HCT116 (cell line): ENCODE measurements at regions of chr19 and their contacts with region 1.

Region 1: GRCh38 chr19:58558623-58559274 is 338 bp upstream of the UBE2M start:
- DNase-seq: peak; percentile 98
- ATAC-seq: peak; percentile 68
- H3K4me3 ChIP-seq: peak overlapping the region; percentile 74 to 99
- H3K27ac ChIP-seq: peak overlapping the region; percentile 98
- H3K4me1 ChIP-seq: peaks cover 22 to 49% of the 10 kb centered on the region in 2 experiments
- H3K27me3 ChIP-seq: no peaks in the 10 kb centered on the region
- CTCF ChIP-seq: no peak
- POLR2A ChIP-seq: no peak
- RAD21 ChIP-seq: no peak

Region 2: DNA sequence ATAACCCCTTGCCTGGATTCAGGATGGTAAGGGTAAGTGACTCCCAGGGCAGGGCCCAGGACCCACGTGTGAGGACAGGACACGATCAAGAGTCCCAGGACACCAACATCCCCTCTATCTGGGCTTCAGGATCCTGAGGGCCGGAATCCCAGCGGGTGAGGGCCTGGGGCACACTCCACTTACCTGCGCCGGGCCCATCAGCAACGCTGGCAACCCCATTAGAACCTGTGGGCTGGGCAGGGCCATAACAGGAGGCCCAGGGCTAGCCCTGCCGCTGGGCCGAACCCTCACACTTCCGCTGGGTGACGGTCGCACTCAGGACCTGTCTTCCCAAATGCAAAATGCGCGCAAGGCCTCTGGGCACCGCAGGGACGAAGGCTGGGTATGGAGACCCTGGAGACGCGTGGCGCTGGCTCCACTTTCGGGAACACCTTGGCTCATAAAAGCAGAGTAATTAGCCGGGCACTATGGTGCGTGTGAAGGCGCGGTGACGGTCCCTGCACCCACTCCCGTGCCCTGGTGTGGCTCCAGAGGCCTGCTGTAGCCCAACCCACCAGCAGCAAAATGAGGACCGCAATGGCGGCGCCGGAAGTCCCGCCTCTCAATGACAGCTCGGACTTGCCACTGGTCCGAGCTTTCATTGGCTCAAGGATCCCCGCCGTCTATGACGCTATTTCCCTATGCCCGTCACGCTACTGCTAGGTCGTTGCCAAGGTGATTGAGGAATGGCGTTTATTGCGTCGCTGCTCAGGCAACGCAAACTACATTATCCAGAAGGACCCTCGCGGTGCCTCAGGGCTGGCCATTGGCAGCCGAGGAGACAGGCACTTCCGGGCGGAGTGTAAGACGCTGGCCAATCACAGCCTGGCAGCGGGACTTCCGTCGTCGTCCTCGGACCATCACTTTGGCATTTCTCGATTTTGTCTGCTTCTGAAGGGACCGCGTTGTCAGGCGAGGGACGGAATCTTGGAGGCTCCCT is 118.9 kb before region 1 on chr19 and contains the start of gene ZNF132:
- CTCF ChIA-PET with region 1: no interaction called
- POLR2A ChIA-PET with region 1: no interaction called
- RAD21 ChIA-PET with region 1: no interaction called
- intact Hi-C with region 1: no loop called
- DNase-seq: no peak
- ATAC-seq: no peak
- H3K4me3 ChIP-seq: no peak within 1 kb of the TSS
- H3K27ac ChIP-seq: no peak within 1 kb of the TSS
- H3K4me1 ChIP-seq: no peaks in the 10 kb centered on the region
- H3K27me3 ChIP-seq: no peaks in the 10 kb centered on the region
- CTCF ChIP-seq: no peak
- POLR2A ChIP-seq: no peak
- RAD21 ChIP-seq: no peak
- total RNA-seq, gene ZNF132: not detected

Region 3: GRCh38 chr19:58450836-58451357 is 107.9 kb before region 1 on chr19:
- CTCF ChIA-PET with region 1: no interaction called
- POLR2A ChIA-PET with region 1: no interaction called
- RAD21 ChIA-PET with region 1: no interaction called
- intact Hi-C with region 1: no loop called
- DNase-seq: no peak
- ATAC-seq: peak; percentile 51
- H3K4me3 ChIP-seq: peak overlapping the region; percentile 62 to 73
- H3K27ac ChIP-seq: no peak overlapping the region
- H3K4me1 ChIP-seq: peaks cover 6 to 10% of the 10 kb centered on the region in 2 experiments; a peak in 2 of 4 replicates
- H3K27me3 ChIP-seq: no peaks in the 10 kb centered on the region
- CTCF ChIP-seq: no peak
- POLR2A ChIP-seq: no peak
- RAD21 ChIP-seq: no peak

Region 4: GRCh38 chr19:58475714-58476497 is 82.8 kb before region 1 on chr19 and contains the start of gene ZNF446:
- CTCF ChIA-PET with region 1: no interaction called
- POLR2A ChIA-PET with region 1: no interaction called
- RAD21 ChIA-PET with region 1: no interaction called
- intact Hi-C with region 1: no loop called
- DNase-seq: peak; percentile 95
- ATAC-seq: peak; percentile 84
- H3K4me3 ChIP-seq: peak within 1 kb of the TSS; percentile 75 to 76
- H3K27ac ChIP-seq: peak within 1 kb of the TSS; percentile 69
- H3K4me1 ChIP-seq: peaks cover 13 to 25% of the 10 kb centered on the region in 2 experiments
- H3K27me3 ChIP-seq: no peaks in the 10 kb centered on the region
- CTCF ChIP-seq: no peak
- POLR2A ChIP-seq: peak; percentile 53
- RAD21 ChIP-seq: no peak
- total RNA-seq, gene ZNF446: 6.5 TPM

Region 5: GRCh38 chr19:58529405-58529804 is 29.3 kb before region 1 on chr19:
- CTCF ChIA-PET with region 1: no interaction called
- POLR2A ChIA-PET with region 1: no interaction called
- RAD21 ChIA-PET with region 1: no interaction called
- intact Hi-C with region 1: no loop called
- DNase-seq: no peak
- ATAC-seq: no peak
- H3K4me3 ChIP-seq: no peak overlapping the region
- H3K27ac ChIP-seq: no peak overlapping the region
- H3K4me1 ChIP-seq: no peaks in the 10 kb centered on the region
- H3K27me3 ChIP-seq: peaks cover 4% of the 10 kb centered on the region; the same call in 1 of the 2 replicates
- CTCF ChIP-seq: no peak
- POLR2A ChIP-seq: no peak
- RAD21 ChIP-seq: no peak

Region 6: DNA sequence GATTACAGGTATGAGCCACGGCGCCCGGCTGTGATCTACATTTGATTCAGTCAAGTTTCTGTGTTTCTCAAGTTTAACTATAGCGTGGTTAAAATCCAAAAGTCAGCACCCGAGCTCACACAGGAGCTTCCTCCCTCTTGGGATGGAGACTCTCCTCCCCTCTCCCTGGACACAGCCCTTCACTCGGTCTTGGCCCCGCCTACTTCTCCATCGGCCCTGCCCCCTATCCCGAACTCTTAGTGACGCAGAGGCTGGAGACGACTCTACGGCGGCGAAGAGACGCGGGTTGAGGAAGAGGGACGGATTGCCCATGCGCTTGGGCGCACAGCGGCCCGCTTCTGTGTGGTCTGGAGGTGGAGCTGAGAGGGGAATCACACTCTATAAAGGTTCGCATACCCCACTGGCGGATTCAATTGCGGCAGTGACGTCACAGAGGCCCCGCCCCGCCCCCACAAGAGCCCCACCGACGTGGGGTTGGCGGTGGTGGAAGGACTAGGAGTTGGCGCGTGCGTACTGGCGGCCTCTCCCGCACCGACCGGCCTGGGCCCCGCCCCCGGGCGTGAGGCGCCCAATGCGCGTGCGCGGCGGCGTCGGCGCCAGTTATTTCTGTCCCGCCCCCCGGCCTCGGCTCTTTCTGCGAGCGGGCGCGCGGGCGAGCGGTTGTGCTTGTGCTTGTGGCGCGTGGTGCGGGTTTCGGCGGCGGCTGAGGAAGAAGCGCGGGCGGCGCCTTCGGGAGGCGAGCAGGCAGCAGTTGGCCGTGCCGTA is 14.7 kb before region 1 on chr19 and contains the start of gene TRIM28:
- CTCF ChIA-PET with region 1: no interaction called
- POLR2A ChIA-PET with region 1: interaction called, 21 read pairs
- RAD21 ChIA-PET with region 1: no interaction called
- intact Hi-C with region 1: no loop called
- DNase-seq: peak; percentile 96
- ATAC-seq: peak; percentile 92
- H3K4me3 ChIP-seq: peak within 1 kb of the TSS; percentile 90 to 94
- H3K27ac ChIP-seq: peak within 1 kb of the TSS; percentile 77
- H3K4me1 ChIP-seq: peaks cover 14 to 27% of the 10 kb centered on the region in 2 experiments
- H3K27me3 ChIP-seq: peaks cover 10% of the 10 kb centered on the region; the same call in 1 of the 2 replicates
- CTCF ChIP-seq: no peak
- POLR2A ChIP-seq: peak; percentile 88
- RAD21 ChIP-seq: no peak
- total RNA-seq, gene TRIM28: 908 TPM

Region 7: GRCh38 chr19:58572818-58573657 is 14.3 kb after region 1 on chr19 and contains the start of gene MZF1:
- CTCF ChIA-PET with region 1: no interaction called
- POLR2A ChIA-PET with region 1: interaction called, 8 read pairs
- RAD21 ChIA-PET with region 1: no interaction called
- intact Hi-C with region 1: loop called (anchors 1 kb)
- DNase-seq: peak; percentile 100
- ATAC-seq: peak; percentile 70
- H3K4me3 ChIP-seq: peak within 1 kb of the TSS; percentile 78 to 86
- H3K27ac ChIP-seq: peak within 1 kb of the TSS; percentile 91
- H3K4me1 ChIP-seq: peaks cover 12 to 28% of the 10 kb centered on the region in 2 experiments
- H3K27me3 ChIP-seq: no peaks in the 10 kb centered on the region
- CTCF ChIP-seq: no peak
- POLR2A ChIP-seq: no peak
- RAD21 ChIP-seq: no peak
- total RNA-seq, gene MZF1: 33.0 TPM